Endothelial cell of umbilical vein (primary cell): ENCODE measurements at regions of chr10 and their contacts with region 1.

Region 1: DNA sequence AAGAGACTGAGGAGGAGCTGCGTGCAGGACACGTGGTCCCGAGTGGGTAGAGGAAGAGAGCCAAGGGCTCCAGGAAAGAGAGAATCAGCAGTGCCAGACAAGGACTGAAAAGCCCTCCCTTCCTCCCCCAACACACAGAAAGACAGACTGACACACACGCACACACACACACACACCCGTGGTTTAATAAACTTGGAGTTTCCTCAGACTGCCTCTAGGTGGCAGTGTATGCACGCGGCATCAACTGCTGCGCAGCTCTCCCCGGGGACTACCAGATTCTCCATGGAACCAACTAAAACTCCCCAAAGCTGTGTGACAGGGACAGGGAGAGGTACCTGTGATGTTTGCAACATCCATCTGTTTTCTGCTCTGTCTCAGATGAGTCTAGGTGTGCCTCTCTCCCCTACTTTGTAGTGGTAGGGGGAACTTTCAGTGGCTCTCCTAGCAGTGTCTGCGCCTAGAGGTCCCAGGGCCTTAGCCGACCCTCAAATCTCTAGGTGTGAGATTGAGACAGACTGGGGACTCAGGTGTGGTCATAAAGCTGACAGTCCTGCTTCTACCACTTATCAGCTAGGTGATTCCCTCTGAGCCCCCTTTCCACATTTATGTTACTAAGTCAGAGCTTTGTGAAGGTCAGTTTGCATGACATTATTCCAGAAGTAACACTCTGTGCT is 9.3 kb upstream of the TSPAN14 start:
- DNase-seq: peak; percentile 70
- H3K4me3 ChIP-seq: no peak overlapping the region
- H3K27ac ChIP-seq: no peak overlapping the region
- H3K4me1 ChIP-seq: peaks cover 22% of the 10 kb centered on the region
- H3K27me3 ChIP-seq: no peaks in the 10 kb centered on the region
- CTCF ChIP-seq: peak; percentile 80 to 87
- POLR2A ChIP-seq: no peak

Region 2: GRCh38 chr10:80408242-80409101 is 36.3 kb before region 1 on chr10 and contains the start of gene PRXL2A:
- CTCF ChIA-PET with region 1: interaction called, 29 read pairs
- POLR2A ChIA-PET with region 1: no interaction called
- dilution Hi-C with region 1: no loop called
- intact Hi-C with region 1: loop called (anchors 1 kb)
- DNase-seq: peak; percentile 90
- H3K4me3 ChIP-seq: peak within 1 kb of the TSS; percentile 81 to 89 (median 87)
- H3K27ac ChIP-seq: peak within 1 kb of the TSS; percentile 93
- H3K4me1 ChIP-seq: peaks cover 42% of the 10 kb centered on the region
- H3K27me3 ChIP-seq: no peaks in the 10 kb centered on the region
- CTCF ChIP-seq: peak in 1 of 2 donors; percentile 4
- POLR2A ChIP-seq: peak; percentile 90
- total RNA-seq, gene PRXL2A: 290 and 321 TPM in 2 replicates

Region 3: GRCh38 chr10:80498833-80499741 is 54.3 kb after region 1 on chr10:
- CTCF ChIA-PET with region 1: interaction called, 1,118 read pairs
- POLR2A ChIA-PET with region 1: interaction called, 3 read pairs
- dilution Hi-C with region 1: no loop called
- intact Hi-C with region 1: no loop called
- DNase-seq: peak; percentile 78
- H3K4me3 ChIP-seq: no peak overlapping the region
- H3K27ac ChIP-seq: peak overlapping the region; percentile 76
- H3K4me1 ChIP-seq: peaks cover 96% of the 10 kb centered on the region
- H3K27me3 ChIP-seq: no peaks in the 10 kb centered on the region
- CTCF ChIP-seq: no peak
- POLR2A ChIP-seq: peak; percentile 36

Region 4: GRCh38 chr10:80530251-80530650 is 85.5 kb after region 1 on chr10:
- CTCF ChIA-PET with region 1: interaction called, 6 read pairs
- POLR2A ChIA-PET with region 1: no interaction called
- dilution Hi-C with region 1: no loop called
- intact Hi-C with region 1: loop called (anchors 1 kb)
- DNase-seq: no peak
- H3K4me3 ChIP-seq: no peak overlapping the region
- H3K27ac ChIP-seq: no peak overlapping the region
- H3K4me1 ChIP-seq: no peaks in the 10 kb centered on the region
- H3K27me3 ChIP-seq: no peaks in the 10 kb centered on the region
- CTCF ChIP-seq: peak in 1 of 2 donors; percentile 38
- POLR2A ChIP-seq: no peak

Region 5: DNA sequence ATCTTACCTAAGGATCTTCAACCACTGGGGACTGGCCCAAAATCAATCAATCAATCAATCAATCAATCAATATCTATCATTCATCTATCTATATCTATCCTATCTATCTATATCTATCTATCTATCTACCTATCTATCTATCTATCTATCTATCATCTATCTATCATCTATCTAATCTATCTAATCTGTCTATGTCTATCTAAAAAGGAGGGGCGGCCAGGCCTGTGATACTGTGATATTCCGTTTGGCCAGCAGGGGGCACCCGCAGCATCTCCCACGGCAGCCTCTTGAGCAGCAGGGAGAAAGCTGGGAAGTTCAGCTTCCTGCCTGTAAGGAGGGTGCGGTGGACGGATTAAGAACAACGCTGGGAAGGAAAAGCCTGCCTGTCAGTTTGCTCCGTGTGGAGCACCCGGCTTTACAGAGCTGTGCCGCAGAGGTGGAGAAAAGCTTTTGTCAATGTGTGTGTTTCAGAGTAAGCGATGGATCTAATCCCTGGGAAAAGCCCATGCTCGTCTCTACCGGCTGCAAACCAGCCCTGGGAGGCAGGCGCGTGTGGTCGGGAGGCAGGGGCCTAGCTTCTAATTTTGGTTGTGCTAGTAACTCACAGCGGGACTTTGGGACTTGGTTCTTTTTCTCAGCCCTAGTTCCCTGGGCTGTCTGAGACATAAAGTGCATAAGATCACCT is 217.9 kb after region 1 on chr10:
- CTCF ChIA-PET with region 1: interaction called, 33 read pairs
- POLR2A ChIA-PET with region 1: no interaction called
- dilution Hi-C with region 1: no loop called
- intact Hi-C with region 1: loop called (anchors 1 kb)
- DNase-seq: peak; percentile 84
- H3K4me3 ChIP-seq: peak overlapping the region in 1 of 3 experiments; percentile 4
- H3K27ac ChIP-seq: no peak overlapping the region
- H3K4me1 ChIP-seq: peaks cover 4% of the 10 kb centered on the region
- H3K27me3 ChIP-seq: peaks cover 0 to 2% of the 10 kb centered on the region in 2 experiments
- CTCF ChIP-seq: peak; percentile 79 to 81
- POLR2A ChIP-seq: no peak

Region 6: GRCh38 chr10:81018708-81019365 is 574.1 kb after region 1 on chr10:
- CTCF ChIA-PET with region 1: interaction called, 5 read pairs
- POLR2A ChIA-PET with region 1: no interaction called
- dilution Hi-C with region 1: no loop called
- intact Hi-C with region 1: loop called (anchors 1 kb)
- DNase-seq: peak; percentile 53
- H3K4me3 ChIP-seq: no peak overlapping the region
- H3K27ac ChIP-seq: no peak overlapping the region
- H3K4me1 ChIP-seq: no peaks in the 10 kb centered on the region
- H3K27me3 ChIP-seq: no peaks in the 10 kb centered on the region
- CTCF ChIP-seq: peak; percentile 68 to 77
- POLR2A ChIP-seq: no peak